Mammary epithelial cell (primary cell): ENCODE measurements at regions of chr16 and their contacts with region 1.

Region 1: GRCh38 chr16:69417520-69418199 is 6.8 kb upstream of the CYB5B start:
- DNase-seq: no peak
- H3K4me3 ChIP-seq: no peak overlapping the region
- H3K27ac ChIP-seq: no peak overlapping the region
- H3K4me1 ChIP-seq: peaks cover 8% of the 10 kb centered on the region
- H3K27me3 ChIP-seq: no peaks in the 10 kb centered on the region
- CTCF ChIP-seq: no peak

Region 2: GRCh38 chr16:69367980-69368379 is 49.7 kb before region 1 on chr16:
- CTCF ChIA-PET with region 1: no interaction called
- dilution Hi-C with region 1: loop called (anchors 5 kb)
- in situ Hi-C with region 1: no loop called
- intact Hi-C with region 1: no loop called
- DNase-seq: no peak
- H3K4me3 ChIP-seq: no peak overlapping the region
- H3K27ac ChIP-seq: no peak overlapping the region
- H3K4me1 ChIP-seq: no peaks in the 10 kb centered on the region
- H3K27me3 ChIP-seq: no peaks in the 10 kb centered on the region
- CTCF ChIP-seq: no peak